ENCODE measurements at regions of chr1 and their contacts with region 1.

Region 1: DNA sequence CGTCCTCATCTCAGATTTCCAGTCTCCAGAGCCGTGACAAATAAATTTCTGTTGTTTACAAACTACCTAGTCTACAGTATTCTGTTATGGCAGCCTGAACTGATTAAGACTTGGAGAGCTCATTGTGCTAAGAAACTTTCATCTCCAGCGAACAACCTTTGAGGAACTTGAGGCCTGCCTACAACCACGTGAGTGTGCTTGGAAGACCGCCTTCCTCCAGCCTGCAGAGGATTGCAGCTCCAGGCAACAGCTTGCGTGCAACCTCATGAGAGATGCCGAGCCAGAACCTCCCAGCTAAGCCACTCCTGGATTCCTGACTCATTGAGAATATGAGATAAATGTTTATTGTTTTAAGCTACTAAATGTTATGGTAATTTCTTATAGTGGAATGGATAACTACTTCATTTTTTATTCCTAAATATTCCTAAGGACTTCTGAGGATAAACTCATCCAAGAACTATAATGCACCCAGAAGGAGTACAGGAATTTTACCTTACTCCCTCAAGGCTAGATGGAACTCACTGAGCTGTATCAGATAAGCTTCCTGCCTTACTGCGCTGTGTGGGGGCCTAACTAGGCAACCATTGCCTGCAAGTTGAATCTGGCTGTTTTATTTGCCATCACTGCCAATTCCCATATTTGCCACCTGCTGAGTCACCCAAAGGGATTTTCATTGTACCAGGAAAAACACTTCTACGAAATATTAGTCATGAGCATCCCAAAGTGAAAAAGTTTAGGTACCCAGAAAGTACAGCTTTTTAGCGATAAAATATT is 17.6 kb downstream of the FAM177B start:
- DNase-seq: peak; percentile 99
- ATAC-seq: peak; percentile 98
- H3K4me3 ChIP-seq: 0 out of 2 replicates have a peak overlapping the region, but pooled peaks have one; percentile 0
- H3K27ac ChIP-seq: peak overlapping the region; percentile 85
- H3K4me1 ChIP-seq: peaks cover 21% of the 10 kb centered on the region
- H3K27me3 ChIP-seq: no peaks in the 10 kb centered on the region
- CTCF ChIP-seq: no peak

Region 2: DNA sequence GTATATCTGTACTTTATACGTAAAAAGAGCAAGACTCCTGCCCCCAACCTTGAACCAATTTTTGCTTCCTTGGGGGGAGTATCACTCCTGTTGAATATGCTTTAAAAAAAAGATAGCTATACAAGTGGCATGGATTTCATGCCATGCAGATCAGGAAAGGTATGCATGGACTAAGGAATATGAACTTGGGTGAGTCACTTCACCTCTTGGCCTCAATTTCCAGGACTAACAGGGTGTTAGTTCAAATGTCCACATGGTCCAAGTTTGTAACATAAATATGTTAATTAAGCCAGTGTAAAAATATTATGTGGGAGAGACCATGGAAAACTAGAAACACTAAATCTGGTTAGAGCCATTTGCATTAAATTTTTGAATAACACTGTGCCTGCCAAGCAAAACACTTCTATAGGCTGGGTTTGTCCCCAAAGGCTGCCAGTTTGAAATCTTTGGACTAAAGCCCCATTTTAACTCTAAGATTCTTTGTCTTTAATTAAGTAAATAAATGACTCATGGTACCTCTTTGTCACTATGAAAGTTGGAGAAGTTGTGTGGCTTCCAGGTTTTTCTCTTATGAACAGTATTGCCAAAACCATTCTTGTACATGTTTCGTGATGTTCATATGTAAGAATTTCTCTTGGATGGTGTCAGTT is 15.5 kb after region 1 on chr1:
- CTCF ChIA-PET with region 1: no interaction called
- POLR2A ChIA-PET with region 1: no interaction called
- intact Hi-C with region 1: loop called (anchors 1 kb)
- DNase-seq: peak; percentile 58
- ATAC-seq: peak; percentile 85
- H3K4me3 ChIP-seq: no peak overlapping the region
- H3K27ac ChIP-seq: peak overlapping the region; percentile 11; the same call in 1 of the 2 replicates
- H3K4me1 ChIP-seq: peaks cover 12% of the 10 kb centered on the region
- H3K27me3 ChIP-seq: no peaks in the 10 kb centered on the region
- CTCF ChIP-seq: no peak

Measured in PC-3 (cell line).